Activated CD4-positive, alpha-beta T cell treated with anti-CD3 and anti-CD28 coated beads, Interleukin-2, amount 10 ng/mL, durations not matched to agents 7 days and 5 days (primary cell): ENCODE measurements at regions of chr1 and their contacts with region 1.

Region 1: DNA sequence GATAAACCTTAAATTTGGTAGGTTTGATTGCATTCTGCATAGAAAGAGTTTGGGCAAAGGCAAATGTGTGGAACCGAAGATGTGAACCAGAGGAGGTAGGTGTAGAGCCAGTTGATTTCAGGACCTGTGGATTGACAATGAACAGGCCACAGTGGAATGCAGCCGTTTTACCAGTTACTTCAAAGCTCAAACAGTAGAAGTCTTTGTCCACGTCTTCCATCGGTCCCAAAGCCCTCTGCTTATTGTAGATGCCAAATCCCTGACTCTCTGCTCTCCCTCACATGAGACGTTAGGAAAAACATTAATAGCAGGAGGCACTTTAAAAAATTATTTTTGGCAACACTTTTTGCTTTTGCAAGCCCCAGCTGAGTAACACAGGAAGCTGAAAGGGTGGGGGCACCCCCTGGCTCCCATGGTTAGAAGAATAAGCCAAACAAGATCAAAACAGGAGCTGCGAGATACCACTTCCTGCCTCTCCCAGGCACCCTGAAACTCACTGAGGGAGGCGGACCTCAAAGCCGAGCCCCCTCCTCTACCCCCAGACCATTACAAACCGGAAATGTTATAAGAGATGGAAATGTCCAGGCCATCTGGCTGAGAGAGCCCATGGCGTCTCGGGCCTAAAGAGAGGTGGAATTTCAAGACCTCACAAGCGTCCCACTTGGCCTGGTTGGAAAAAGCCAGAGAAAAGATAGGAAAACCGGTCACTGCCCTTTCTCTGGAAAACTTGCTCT is 13.5 kb downstream of the TRAF3IP3 start:
- DNase-seq: peak; percentile 88
- H3K4me3 Mint-ChIP-seq: no peak overlapping the region
- H3K27ac Mint-ChIP-seq: no peak overlapping the region
- H3K4me1 Mint-ChIP-seq: peaks cover 41% of the 10 kb centered on the region
- H3K27me3 Mint-ChIP-seq: no peaks in the 10 kb centered on the region

Region 2: DNA sequence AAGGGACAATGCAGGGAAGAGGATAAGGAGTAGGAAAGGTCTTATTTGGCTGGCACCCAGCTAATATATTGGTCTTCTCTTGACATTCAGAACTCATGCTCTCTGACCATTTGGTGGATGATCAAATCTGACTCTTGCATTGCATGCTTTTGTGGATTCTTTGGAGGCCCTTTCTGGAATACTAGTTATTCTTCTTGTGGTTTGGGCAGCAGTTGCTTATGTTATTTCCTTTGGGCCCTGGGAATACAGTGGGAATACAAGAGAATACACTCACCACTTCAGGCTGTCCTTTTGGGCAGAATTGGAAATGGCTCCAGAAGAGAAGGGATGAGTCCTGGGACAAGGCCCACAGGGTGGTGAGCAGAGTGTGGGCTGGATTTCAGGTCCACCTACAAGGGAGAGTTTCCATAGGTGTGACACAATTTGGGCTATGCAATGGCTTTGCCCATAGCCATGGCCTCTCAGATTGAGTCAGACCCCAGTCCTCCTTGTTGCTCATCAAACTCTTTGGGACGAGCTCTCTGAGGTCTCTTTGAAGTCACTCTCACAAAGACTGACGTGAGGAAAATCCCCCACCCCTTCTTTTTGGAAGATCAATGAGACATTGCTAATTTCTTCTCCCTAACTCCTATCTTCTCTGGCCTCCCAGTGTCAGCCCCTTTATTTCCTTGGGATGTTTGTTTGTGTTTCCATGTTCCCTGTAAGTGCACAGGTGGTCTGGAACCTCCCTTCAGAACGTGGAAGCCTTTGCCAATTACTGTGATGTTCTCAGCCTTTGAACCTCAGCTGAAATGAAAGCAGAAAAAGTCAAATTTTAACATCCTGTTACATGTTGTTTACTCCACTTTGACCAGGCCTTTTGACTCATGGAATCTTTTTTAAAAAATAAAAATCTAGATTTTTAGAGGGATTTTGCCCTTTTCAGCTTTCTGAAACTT is 45.3 kb before region 1 on chr1:
- CTCF ChIA-PET with region 1: no interaction called
- POLR2A ChIA-PET with region 1: no interaction called
- DNase-seq: peak; percentile 26
- H3K4me3 Mint-ChIP-seq: peak overlapping the region; percentile 34
- H3K27ac Mint-ChIP-seq: peak overlapping the region; percentile 98
- H3K4me1 Mint-ChIP-seq: peaks cover 31% of the 10 kb centered on the region
- H3K27me3 Mint-ChIP-seq: no peaks in the 10 kb centered on the region

Region 3: GRCh38 chr1:209755926-209756614 is 13.3 kb before region 1 on chr1 and contains the start of gene TRAF3IP3:
- CTCF ChIA-PET with region 1: interaction called, 74 read pairs
- POLR2A ChIA-PET with region 1: interaction called, 48 read pairs
- DNase-seq: peak; percentile 88
- H3K4me3 Mint-ChIP-seq: peak within 1 kb of the TSS; percentile 91
- H3K27ac Mint-ChIP-seq: peak within 1 kb of the TSS; percentile 93
- H3K4me1 Mint-ChIP-seq: peaks cover 74% of the 10 kb centered on the region
- H3K27me3 Mint-ChIP-seq: no peaks in the 10 kb centered on the region
- total RNA-seq, gene TRAF3IP3: 426 to 434 TPM

Region 4: GRCh38 chr1:209780268-209780667 is 10.9 kb after region 1 on chr1:
- CTCF ChIA-PET with region 1: interaction called, 27 read pairs
- POLR2A ChIA-PET with region 1: interaction called, 5 read pairs
- DNase-seq: no peak
- H3K4me3 Mint-ChIP-seq: peak overlapping the region; percentile 27
- H3K27ac Mint-ChIP-seq: peak overlapping the region; percentile 68
- H3K4me1 Mint-ChIP-seq: peaks cover 64% of the 10 kb centered on the region
- H3K27me3 Mint-ChIP-seq: no peaks in the 10 kb centered on the region

Region 5: DNA sequence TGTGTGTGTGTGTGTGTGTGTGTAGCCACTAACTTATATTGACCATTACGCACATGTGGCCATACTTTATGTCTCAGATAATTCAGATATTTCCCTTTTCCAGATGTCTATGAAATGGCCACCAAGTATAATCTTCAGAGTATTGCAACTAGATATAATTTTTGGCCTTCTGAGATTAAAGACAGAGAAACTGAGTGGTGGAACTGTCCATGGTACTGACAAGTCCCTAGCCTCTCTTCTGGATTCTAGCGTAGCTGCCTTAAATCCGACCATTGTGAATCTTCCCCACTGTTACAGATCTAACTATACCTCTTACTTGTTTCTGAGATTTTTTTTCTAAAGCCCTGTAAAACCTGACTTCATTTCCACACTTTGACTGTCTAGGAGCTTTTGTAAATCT is 363.2 kb after region 1 on chr1:
- CTCF ChIA-PET with region 1: no interaction called
- POLR2A ChIA-PET with region 1: no interaction called
- DNase-seq: peak; percentile 16
- H3K4me3 Mint-ChIP-seq: no peak overlapping the region
- H3K27ac Mint-ChIP-seq: no peak overlapping the region
- H3K4me1 Mint-ChIP-seq: no peaks in the 10 kb centered on the region
- H3K27me3 Mint-ChIP-seq: no peaks in the 10 kb centered on the region